Dendritic cell treated with granulocyte-macrophage colony-stimulating factor and Interleukin-4, amounts not matched to agents 40 ng/mL and 50 ng/mL, for 4 days (primary cell): ENCODE measurements at regions of chr16 and their contacts with region 1.

Region 1: DNA sequence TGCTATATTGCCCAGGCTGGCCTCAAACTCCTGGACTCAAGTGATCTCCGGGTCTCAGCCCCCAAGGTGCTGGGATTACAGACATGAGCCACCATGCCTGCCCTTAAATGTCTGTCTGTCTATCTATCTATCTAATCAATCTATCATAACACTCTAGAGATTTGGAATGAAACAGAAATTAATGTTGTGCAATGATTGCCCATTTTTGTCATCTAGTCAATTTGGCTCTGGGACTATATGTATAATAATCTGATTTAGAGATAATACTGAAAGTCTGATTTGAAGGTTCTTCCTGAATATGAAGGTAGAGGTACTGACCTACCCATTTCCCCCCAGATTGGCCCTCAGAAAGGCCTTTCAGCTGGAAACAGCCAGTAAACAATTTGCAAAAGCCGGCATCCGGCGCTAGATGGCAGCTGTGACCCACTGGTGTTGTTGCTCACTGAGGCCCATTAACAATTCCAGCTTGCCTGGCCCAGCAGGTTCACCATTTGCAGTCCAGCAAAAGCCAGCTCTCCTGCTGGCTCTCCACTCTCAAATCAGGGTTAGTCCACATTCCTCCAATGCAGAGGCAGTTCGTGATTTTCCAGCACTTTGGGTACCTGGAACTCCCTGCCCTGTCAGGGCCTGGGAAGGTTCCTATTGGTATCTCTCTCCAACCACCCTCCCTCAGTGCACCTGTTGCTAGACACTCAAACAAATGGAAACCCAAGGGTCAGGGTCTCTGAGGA is 22.9 kb upstream of the C16orf87 start:
- H3K4me3 Mint-ChIP-seq: no peak overlapping the region
- H3K27ac Mint-ChIP-seq: no peak overlapping the region
- H3K4me1 Mint-ChIP-seq: no peaks in the 10 kb centered on the region
- H3K27me3 Mint-ChIP-seq: no peaks in the 10 kb centered on the region

Region 2: DNA sequence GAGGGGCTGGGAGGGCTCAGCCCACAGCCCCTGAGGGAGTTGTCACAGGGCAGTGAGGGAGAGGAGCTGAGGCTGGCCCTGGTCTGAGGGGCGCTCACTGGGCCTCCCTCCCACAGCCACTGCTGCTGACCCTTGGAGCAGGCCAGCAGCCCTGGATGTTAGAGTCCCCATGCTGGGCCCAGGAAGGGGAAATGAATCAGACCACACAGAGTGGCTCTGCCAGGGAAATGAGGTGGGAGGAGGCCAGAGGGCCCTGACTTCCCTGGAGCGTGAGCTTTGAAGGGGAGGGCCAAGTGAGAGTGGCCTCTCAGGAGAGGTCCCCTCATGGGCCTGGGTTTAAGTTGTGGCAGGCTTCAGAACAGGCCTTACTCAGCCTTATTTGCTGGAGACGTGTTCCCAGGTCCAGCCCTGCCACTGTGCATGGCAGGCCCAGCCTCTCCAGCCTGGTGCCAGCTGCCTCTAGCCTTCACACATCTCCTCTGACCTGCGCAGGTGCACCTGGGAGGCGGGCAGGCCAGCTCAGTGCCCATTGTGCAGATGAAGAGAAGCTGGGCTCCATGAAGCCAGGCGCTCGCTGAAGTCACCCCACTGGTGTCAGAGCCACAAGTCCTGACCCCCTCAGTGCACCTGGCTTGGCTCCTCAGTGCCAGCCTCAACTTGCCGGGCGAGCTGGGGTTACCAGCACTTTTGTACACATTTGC is 45.7 kb after region 1 on chr16:
- intact Hi-C with region 1: no loop called
- H3K4me3 Mint-ChIP-seq: no peak overlapping the region
- H3K27ac Mint-ChIP-seq: peak overlapping the region; percentile 71
- H3K4me1 Mint-ChIP-seq: peaks cover 17% of the 10 kb centered on the region
- H3K27me3 Mint-ChIP-seq: no peaks in the 10 kb centered on the region

Region 3: DNA sequence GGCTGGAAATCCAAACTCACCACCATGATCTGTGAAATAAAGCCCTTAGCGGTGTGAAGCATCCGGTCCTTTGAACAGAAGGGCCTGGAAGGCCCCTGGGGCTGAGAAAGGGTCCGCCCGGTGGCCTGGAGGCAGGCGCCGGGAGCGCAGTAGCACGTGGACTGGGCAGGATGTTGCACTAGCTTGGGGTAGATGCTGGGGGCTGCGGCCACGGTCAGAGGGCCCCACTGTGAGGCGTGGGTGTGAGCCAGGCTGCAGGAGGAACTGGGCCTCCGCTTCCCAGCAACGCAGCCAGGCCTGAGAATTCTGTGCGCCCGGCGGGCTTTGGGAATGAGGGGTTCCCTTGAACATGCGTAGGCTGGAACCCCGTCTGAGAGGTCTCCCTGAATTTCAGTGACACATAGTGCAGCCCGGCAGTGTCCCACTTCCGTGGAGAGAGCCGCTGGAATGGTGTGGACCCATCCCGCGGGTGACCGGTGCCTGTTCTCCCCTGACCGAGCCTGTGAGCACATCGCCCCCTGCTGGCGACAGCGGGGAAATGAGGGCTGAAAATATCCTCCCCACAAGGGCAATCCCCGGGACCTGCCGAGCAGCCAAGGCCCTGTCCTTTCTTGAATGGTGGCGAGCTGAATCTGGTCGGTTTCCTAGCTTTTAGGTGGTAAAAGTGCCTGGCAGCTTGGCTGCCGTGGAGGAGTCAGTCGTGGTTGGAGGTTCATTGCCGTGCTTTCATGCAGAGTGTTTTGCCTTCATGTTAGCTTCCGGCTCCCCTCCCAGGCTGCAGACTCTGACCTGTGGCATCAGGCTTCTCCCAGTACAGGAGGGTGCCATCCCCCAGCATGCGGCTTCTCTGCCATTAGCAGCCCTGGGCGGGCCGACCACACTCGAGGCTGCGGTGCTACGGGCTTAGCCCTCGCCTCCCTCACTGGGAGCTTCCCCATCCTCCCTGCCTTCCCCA is 75.8 kb after region 1 on chr16:
- intact Hi-C with region 1: loop called (anchors 1 kb)
- H3K4me3 Mint-ChIP-seq: no peak overlapping the region
- H3K27ac Mint-ChIP-seq: no peak overlapping the region
- H3K4me1 Mint-ChIP-seq: peaks cover 11% of the 10 kb centered on the region
- H3K27me3 Mint-ChIP-seq: peaks cover 9% of the 10 kb centered on the region